Mammary epithelial cell (primary cell): ENCODE measurements at regions of chr3 and their contacts with region 1.

Region 1: GRCh38 chr3:39990532-39990931 is 181.1 kb downstream of the MYRIP start:
- DNase-seq: peak; percentile 55
- H3K4me3 ChIP-seq: no peak overlapping the region
- H3K27ac ChIP-seq: no peak overlapping the region
- H3K4me1 ChIP-seq: no peaks in the 10 kb centered on the region
- H3K27me3 ChIP-seq: no peaks in the 10 kb centered on the region
- CTCF ChIP-seq: peak; percentile 72 to 73

Region 2: DNA sequence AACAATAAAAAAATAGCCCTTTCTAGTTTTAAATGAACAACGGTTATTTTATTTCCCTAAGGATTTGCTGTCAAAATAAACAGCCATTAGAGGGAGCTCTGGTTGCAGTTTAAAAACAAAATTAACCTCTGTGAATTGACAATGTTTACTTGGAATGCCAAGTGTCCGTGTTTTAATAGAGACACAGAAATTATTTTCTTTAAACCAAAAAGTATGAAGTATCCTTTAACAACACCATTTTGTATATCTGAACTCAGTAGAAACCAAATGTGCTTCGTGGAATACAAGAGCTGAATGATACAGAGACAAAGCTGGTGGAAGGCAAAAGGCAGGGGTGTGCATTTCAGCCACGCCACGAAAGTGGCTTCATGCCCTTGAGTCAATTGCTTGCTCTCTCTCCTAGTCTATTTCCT is 448.6 kb before region 1 on chr3:
- CTCF ChIA-PET with region 1: no interaction called
- dilution Hi-C with region 1: no loop called
- in situ Hi-C with region 1: no loop called
- intact Hi-C with region 1: loop called (anchors 2 kb)
- DNase-seq: no peak
- H3K4me3 ChIP-seq: no peak overlapping the region
- H3K27ac ChIP-seq: no peak overlapping the region
- H3K4me1 ChIP-seq: peaks cover 8% of the 10 kb centered on the region
- H3K27me3 ChIP-seq: no peaks in the 10 kb centered on the region
- CTCF ChIP-seq: peak; percentile 49 to 63

Region 3: GRCh38 chr3:39668420-39668819 is 322.1 kb before region 1 on chr3:
- CTCF ChIA-PET with region 1: no interaction called
- dilution Hi-C with region 1: no loop called
- in situ Hi-C with region 1: no loop called
- intact Hi-C with region 1: loop called (anchors 1 kb)
- DNase-seq: peak; percentile 43
- H3K4me3 ChIP-seq: no peak overlapping the region
- H3K27ac ChIP-seq: no peak overlapping the region
- H3K4me1 ChIP-seq: no peaks in the 10 kb centered on the region
- H3K27me3 ChIP-seq: no peaks in the 10 kb centered on the region
- CTCF ChIP-seq: peak; percentile 73 to 83

Region 4: DNA sequence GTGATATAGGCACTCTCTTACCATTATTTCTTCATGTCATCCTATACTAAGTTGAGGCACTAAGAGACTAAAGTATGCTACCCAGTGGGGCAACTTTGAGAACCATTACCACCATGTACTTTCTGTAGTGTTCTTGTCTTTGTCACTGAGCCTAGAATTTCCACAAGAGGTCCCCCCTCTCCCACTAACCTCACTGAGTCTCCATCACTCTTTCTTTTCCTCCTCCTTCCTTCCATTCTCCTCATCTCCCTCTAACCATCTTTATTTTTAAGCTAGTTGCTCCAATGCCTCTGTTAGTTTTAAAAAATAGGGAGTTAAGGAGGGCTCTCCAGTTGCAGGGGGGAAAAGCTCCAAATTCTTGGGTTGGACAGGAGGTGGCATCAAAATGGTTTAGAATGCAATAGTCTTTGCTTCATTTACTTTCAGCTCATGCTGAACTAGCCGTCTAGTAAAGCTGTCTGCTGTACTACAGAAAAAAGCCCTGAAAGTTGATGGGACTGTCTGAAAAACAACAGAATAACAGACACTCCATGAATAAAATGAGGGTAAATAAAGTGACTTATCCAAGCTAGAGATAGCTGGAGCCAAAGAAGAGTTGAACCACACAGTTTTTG is 266.2 kb before region 1 on chr3:
- CTCF ChIA-PET with region 1: no interaction called
- dilution Hi-C with region 1: no loop called
- in situ Hi-C with region 1: loop called in 1 of 2 experiments (anchors 25 kb)
- intact Hi-C with region 1: loop called (anchors 1 kb)
- DNase-seq: no peak
- H3K4me3 ChIP-seq: no peak overlapping the region
- H3K27ac ChIP-seq: no peak overlapping the region
- H3K4me1 ChIP-seq: no peaks in the 10 kb centered on the region
- H3K27me3 ChIP-seq: no peaks in the 10 kb centered on the region
- CTCF ChIP-seq: peak in 1 of 2 donors; percentile 24

Region 5: DNA sequence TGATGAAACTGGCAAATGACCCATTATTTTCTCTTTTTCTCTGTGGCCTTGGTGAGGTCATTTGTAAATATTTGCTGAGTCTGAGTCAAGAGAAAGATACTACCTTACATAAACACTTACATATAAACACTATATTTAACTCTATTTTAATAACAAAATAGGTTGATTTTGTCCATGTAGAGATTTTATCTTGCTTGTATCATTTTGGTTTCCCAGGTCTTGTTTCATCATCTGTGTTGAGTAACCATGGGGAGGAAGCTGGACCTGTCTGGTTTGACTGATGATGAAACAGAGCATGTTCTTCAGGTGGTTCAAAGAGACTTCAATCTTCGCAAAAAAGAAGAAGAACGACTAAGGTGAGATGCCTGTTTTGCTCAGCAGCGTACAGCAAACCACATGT is 90.0 kb before region 1 on chr3:
- CTCF ChIA-PET with region 1: no interaction called
- dilution Hi-C with region 1: no loop called
- in situ Hi-C with region 1: no loop called
- intact Hi-C with region 1: no loop called
- DNase-seq: peak; percentile 58
- H3K4me3 ChIP-seq: no peak overlapping the region
- H3K27ac ChIP-seq: no peak overlapping the region
- H3K4me1 ChIP-seq: no peaks in the 10 kb centered on the region
- H3K27me3 ChIP-seq: no peaks in the 10 kb centered on the region
- CTCF ChIP-seq: no peak

Region 6: DNA sequence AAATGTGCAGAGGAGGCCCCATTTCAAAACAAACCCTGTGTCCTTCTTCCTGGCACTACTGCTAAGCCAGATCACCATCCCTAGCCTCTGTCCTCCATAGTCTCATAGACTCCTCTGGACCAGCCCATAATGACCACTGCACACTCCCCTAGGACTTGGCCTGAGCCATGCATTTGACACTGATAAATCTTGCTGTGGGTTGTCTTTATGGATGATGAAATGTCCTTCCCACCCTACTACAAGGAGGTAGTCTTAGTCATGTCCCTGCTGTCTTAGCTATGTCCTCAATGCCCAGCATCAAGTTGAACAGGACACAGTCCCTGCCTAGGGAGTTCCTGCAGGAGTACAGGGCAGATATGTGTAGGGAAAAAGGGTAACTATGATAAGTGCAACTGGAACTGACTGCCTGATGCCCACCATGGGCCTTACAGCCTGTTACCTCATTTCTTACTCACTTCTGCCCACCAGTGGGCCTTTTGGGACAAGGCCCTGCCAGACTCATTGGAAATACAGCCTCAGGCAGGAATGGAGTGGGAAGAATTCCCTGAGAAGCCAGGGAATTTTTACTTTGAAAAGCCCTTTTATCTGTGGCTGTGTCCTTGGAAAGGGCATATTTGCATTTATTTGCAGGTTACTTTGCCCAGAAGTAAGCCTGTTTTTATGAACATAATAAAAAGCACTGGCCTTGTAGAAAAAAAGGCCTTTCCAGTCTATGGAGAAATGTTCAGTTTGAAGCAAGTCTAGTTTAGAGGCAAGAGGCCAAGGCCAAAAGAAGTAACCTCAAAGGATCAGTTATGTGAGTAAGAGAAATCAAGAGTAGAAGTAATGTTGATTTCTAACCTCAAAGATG is 119.3 kb after region 1 on chr3:
- CTCF ChIA-PET with region 1: no interaction called
- dilution Hi-C with region 1: no loop called
- in situ Hi-C with region 1: no loop called
- intact Hi-C with region 1: no loop called
- DNase-seq: peak; percentile 20
- H3K4me3 ChIP-seq: no peak overlapping the region
- H3K27ac ChIP-seq: no peak overlapping the region
- H3K4me1 ChIP-seq: peaks cover 24% of the 10 kb centered on the region
- H3K27me3 ChIP-seq: no peaks in the 10 kb centered on the region
- CTCF ChIP-seq: peak; percentile 38 to 40

Region 7: DNA sequence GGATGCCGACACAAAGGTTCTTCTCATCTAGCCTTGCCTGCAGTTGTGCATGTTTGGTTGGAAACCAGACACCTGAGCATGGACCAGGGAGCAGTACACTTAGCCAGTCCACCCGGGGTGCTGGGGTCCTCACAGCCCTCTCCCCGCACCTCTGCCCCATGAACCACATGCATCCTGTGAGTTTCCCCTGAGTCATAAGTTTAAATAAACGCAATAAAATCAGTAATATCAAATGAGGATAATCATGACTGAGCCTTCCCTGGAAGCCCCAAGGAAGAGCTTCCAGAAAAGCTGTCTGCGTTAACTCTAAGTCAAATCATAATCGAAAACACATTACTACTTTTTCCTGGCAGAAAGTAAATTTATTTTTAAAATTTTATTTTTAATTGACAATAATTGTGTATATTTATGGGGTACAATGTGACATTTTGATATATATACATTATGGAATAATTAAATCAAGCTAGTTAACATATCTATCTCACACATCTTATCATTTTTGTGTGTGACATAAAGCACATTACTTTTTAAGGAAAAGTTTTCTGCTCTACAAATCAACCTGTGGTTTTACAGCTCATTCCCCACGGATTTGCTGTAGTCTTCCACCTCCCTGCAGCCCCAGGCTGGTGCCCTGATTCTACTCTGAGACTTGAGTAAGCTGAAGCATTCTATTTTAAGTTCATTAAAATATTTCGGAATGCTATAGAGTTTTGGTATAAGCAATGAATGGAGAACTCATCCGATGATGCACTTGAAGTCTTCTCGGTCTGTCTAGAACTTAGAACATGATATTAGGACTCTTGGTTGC is 153.0 kb after region 1 on chr3:
- CTCF ChIA-PET with region 1: no interaction called
- dilution Hi-C with region 1: no loop called
- in situ Hi-C with region 1: no loop called
- intact Hi-C with region 1: no loop called
- DNase-seq: no peak
- H3K4me3 ChIP-seq: no peak overlapping the region
- H3K27ac ChIP-seq: no peak overlapping the region
- H3K4me1 ChIP-seq: no peaks in the 10 kb centered on the region
- H3K27me3 ChIP-seq: no peaks in the 10 kb centered on the region
- CTCF ChIP-seq: no peak

Region 8: DNA sequence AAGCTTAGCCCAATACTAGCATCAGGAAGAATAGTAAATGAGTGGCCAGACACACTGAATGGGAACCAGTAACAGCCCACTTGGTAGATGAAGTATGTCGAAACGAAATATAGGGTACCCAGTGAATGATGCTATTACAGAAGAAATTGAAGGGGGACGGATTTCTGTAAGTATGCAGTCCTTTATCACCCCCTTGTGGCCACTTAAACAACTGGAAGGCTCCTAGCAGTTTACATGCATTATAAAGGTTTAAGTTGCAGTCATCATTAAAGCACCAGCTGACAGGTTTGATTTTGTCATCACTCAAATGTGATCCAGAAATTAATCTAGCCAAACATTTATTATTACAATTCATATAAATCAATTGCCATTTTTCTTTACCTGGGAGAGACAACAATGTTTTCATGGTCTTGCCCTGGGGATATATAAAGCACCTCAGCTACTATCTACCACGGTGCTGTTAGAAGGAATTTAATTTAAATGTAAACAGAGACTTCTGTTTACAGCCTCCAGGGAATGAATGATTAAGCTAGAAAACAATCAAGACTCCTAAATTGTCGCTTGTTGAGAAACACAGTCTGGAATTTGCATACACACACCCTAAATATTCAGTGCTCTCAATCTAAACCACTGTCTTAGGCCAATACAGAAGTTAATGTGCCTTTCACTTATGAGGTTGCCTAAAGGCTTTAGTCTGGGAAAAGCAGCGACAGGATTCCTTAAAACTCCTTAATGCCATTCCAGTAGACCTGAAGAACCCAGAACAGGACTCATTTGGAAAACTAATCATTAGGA is 326.7 kb after region 1 on chr3:
- CTCF ChIA-PET with region 1: no interaction called
- dilution Hi-C with region 1: no loop called
- in situ Hi-C with region 1: no loop called
- intact Hi-C with region 1: loop called (anchors 10 kb)
- DNase-seq: peak; percentile 29
- H3K4me3 ChIP-seq: no peak overlapping the region
- H3K27ac ChIP-seq: no peak overlapping the region
- H3K4me1 ChIP-seq: no peaks in the 10 kb centered on the region
- H3K27me3 ChIP-seq: no peaks in the 10 kb centered on the region
- CTCF ChIP-seq: peak; percentile 80 to 82